Body of pancreas (tissue), 4 donors: ENCODE measurements at regions of chr1 and their contacts with region 1.

Region 1: DNA sequence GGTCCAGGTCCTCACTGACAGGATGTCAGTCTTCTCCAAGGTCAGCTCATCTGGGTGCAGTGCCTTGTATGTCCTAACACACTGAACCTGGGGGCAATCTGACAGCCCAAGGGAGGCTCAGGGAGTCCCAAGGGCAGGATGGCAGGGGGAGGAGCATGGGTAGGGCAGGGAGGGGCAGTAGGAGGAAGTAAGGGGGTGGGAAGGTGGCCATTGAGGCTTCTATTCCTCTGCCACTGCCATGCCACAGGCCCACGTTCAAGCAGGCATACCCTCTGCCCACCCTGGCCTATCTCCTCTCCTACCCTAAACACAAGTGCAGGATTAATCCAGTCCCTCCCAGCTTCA is 13.3 kb downstream of the ARHGEF19 start:
- DNase-seq: no peak
- ATAC-seq: no peak
- H3K4me3 ChIP-seq: no peak overlapping the region
- H3K27ac ChIP-seq: no peak overlapping the region
- H3K4me1 ChIP-seq: no peaks in the 10 kb centered on the region
- H3K27me3 ChIP-seq: no peaks in the 10 kb centered on the region
- CTCF ChIP-seq: no peak
- POLR2A ChIP-seq: no peak

Region 2: DNA sequence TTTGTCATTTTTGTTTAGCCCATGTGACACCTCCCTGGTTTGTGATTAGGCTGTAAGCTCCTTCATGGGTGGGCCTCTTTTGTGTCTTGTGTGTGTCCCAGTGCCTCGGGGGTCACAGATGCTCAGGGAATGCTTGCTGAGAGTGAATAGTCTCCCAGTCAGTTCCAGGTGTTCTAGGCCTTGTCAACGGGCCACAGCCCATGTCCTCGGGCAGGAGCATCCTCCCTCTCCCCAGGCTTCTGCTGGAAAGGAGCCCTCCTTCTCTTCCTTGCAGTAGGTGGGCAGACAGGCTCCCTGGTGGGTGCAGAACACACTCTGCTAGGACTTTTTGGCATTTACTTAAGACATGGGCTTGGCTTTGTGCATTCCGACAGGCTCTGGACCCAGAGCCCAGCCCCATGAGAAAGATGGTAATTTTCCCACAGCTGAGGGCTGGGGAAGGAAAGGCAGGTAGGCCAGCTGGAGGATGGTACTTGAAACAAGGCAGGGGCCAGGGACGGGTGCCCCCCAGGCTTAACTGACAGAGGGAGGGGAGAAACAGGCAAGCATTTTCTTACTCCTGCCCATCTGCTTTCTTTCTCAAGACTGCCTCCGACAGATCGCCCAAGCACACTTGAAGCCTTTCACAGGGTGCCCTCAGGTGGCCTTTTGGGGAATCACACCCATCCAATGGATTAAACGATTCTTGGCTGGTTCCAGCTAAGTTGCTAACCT is 45.0 kb after region 1 on chr1:
- intact Hi-C with region 1: loop called (anchors 5 kb)
- DNase-seq: peak; percentile 89 to 94 (median 90)
- ATAC-seq: peak; percentile 71
- H3K4me3 ChIP-seq: no peak overlapping the region
- H3K27ac ChIP-seq: peak overlapping the region; percentile 37 to 67 (median 54)
- H3K4me1 ChIP-seq: peaks cover 44% of the 10 kb centered on the region
- H3K27me3 ChIP-seq: no peaks in the 10 kb centered on the region
- CTCF ChIP-seq: peak; percentile 82 to 97 (median 93)
- POLR2A ChIP-seq: no peak